ENCODE measurements at regions of chr5 and their contacts with region 1.

Region 1: GRCh38 chr5:36724467-36725332 is 118.3 kb downstream of the SLC1A3 start:
- DNase-seq: peak; percentile 43

Region 2: DNA sequence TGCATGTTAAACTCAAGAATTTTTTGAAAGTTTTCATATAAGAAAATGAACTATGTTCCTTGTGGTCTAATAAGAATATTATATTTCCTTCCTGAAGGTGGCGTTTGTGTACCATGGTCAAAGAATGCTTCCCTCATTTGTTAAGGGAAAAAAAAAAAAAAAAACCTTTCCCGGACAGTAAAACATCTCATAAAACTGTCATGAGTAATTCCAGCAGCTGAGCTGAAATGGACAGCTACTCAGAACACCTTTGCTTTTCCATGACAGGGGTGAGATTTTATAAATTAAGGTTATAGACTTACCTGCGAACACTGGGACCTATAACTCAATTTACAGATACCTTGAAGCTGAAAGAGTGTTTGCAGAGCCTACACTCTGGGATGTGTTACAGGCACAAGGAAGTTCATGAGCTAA is 309.8 kb before region 1 on chr5:
- in situ Hi-C with region 1: loop called (anchors 25 kb)
- DNase-seq: peak; percentile 77

Region 3: GRCh38 chr5:37005946-37006540 is 281.3 kb after region 1 on chr5:
- in situ Hi-C with region 1: loop called (anchors 25 kb)
- DNase-seq: peak; percentile 68